Lower leg skin (tissue), 4 donors: ENCODE measurements at regions of chr20 and their contacts with region 1.

Region 1: DNA sequence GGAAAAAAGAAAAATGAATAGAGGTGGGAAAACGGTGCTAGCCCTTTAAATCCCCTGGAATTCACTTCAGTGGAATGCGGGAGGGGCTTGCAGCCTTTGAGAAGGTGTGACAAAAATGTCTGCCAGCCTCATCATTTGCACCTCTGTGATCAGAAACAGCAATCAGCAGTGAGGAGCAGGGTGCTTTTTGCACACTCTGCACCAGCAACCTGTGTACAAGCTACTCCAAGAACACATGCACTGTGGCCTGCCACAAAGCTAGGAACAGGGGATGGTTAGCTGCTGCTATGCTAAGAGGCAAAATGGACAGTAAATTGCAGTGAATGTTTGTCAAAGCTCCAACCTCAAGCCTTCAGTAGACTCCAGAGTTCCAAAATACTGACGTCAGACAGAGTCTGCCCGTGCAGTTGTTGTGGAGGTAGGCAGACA is 29.7 kb downstream of the GINS1 start:
- DNase-seq: no peak
- H3K4me3 ChIP-seq: no peak overlapping the region
- CTCF ChIP-seq: no peak
- POLR2A ChIP-seq: no peak

Region 2: GRCh38 chr20:25478889-25479568 is 41.9 kb after region 1 on chr20:
- intact Hi-C with region 1: loop called (anchors 2 kb)
- DNase-seq: no peak
- H3K4me3 ChIP-seq: no peak overlapping the region
- CTCF ChIP-seq: no peak
- POLR2A ChIP-seq: no peak

Region 3: DNA sequence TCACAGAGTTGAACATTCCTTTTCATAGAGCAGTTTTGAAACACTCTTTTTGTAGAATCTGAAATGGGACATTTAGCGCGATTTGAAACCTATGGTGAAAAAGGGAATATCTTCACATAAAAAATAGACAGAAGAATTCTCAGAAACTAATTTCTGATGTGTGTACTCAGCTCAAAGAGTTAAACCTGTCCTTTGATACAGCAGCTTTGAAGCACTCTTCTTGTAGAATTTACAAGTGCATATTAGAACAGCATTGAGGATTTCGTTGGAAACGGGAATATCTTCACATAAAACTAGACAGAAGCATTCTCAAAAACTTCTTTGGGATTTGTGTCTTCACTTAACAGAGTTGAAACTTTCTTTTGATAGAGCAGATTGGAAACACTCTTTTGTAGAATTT is 910.2 kb after region 1 on chr20:
- intact Hi-C with region 1: loop called (anchors 5 kb)
- DNase-seq: no peak
- H3K4me3 ChIP-seq: no peak overlapping the region
- CTCF ChIP-seq: no peak
- POLR2A ChIP-seq: no peak